Activated CD4-positive, alpha-beta memory T cell treated with anti-CD3 and anti-CD28 coated beads for 36 hours (primary cell): ENCODE measurements at regions of chr10 and their contacts with region 1.

Region 1: DNA sequence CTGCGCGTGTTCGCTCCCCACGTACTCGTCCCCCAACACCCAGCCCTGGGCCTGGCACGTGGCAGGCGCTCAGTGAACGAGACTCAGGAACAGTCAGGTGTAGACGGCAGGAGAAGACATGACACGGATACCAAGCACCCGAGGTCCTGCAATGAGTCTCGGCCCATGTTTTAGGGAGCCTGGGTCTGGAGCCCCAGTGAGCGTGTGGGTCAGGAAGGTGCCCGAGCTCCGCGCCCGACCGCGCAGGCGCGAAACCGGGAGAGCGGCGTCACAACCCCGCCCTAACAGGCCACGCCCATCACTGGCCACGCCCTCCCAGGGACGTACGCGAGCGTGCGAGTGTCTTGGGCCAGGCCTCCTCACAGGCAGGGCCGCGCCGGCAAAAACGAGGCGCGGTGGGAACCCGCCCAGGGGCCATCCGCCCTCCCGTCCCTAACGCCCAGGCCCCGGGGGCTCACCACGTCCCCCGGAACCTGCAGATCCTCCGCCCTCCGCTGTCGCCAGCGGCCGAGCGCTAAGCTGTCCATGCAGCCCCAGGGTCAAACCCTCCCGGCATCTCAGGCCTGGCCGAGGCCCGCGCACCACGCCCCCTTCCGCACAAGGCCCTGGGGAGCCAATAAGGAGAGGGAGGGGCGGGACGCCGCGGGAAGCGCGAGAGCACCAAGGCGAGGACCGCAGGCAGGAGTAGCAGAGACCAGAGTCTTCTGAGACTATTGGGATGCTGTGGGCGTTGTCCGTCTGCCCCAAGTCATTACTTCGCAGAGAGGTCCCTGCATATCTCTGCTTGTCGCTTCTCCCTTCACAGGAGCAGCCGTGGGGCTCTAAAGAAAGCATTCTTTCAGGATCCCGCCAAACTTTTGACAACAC is at the start of gene C10orf143:
- DNase-seq: peak; percentile 98
- H3K4me3 Mint-ChIP-seq: peak within 1 kb of the TSS; percentile 88
- H3K27ac Mint-ChIP-seq: peak within 1 kb of the TSS; percentile 99
- H3K4me1 Mint-ChIP-seq: peaks cover 46% of the 10 kb centered on the region
- H3K27me3 Mint-ChIP-seq: no peaks in the 10 kb centered on the region
- total RNA-seq, gene C10orf143: 2.5 to 3.0 TPM

Region 2: GRCh38 chr10:129466703-129467358 is 643.6 kb before region 1 on chr10 and contains the start of gene MGMT:
- CTCF ChIA-PET with region 1: interaction called, 7 read pairs
- POLR2A ChIA-PET with region 1: interaction called, 13 read pairs
- intact Hi-C with region 1: loop called (anchors 1 kb)
- DNase-seq: peak; percentile 99
- H3K4me3 Mint-ChIP-seq: peak within 1 kb of the TSS; percentile 75
- H3K27ac Mint-ChIP-seq: peak within 1 kb of the TSS; percentile 56
- H3K4me1 Mint-ChIP-seq: peaks cover 11% of the 10 kb centered on the region
- H3K27me3 Mint-ChIP-seq: peaks cover 3% of the 10 kb centered on the region
- total RNA-seq, gene MGMT: 22.9 to 23.8 TPM

Region 3: GRCh38 chr10:129963641-129964501 is 146.6 kb before region 1 on chr10 and contains the start of gene EBF3:
- CTCF ChIA-PET with region 1: no interaction called
- POLR2A ChIA-PET with region 1: no interaction called
- intact Hi-C with region 1: loop called (anchors 5 kb)
- DNase-seq: peak; percentile 47
- H3K4me3 Mint-ChIP-seq: peak within 1 kb of the TSS; percentile 63
- H3K27ac Mint-ChIP-seq: no peak within 1 kb of the TSS
- H3K4me1 Mint-ChIP-seq: peaks cover 15% of the 10 kb centered on the region
- H3K27me3 Mint-ChIP-seq: peaks cover 62% of the 10 kb centered on the region
- total RNA-seq, gene EBF3: not detected

Region 4: GRCh38 chr10:130127364-130128061 is 17.0 kb after region 1 on chr10:
- CTCF ChIA-PET with region 1: interaction called, 50 read pairs
- POLR2A ChIA-PET with region 1: interaction called, 16 read pairs
- intact Hi-C with region 1: loop called (anchors 1 kb)
- DNase-seq: peak; percentile 73
- H3K4me3 Mint-ChIP-seq: no peak overlapping the region
- H3K27ac Mint-ChIP-seq: no peak overlapping the region
- H3K4me1 Mint-ChIP-seq: peaks cover 5% of the 10 kb centered on the region
- H3K27me3 Mint-ChIP-seq: peaks cover 19% of the 10 kb centered on the region

Region 5: GRCh38 chr10:130136226-130137089 is 26.0 kb after region 1 on chr10 and contains the start of gene GLRX3:
- CTCF ChIA-PET with region 1: interaction called, 59 read pairs
- POLR2A ChIA-PET with region 1: interaction called, 70 read pairs
- intact Hi-C with region 1: loop called (anchors 1 kb)
- DNase-seq: peak; percentile 90
- H3K4me3 Mint-ChIP-seq: peak within 1 kb of the TSS; percentile 88
- H3K27ac Mint-ChIP-seq: peak within 1 kb of the TSS; percentile 83
- H3K4me1 Mint-ChIP-seq: peaks cover 42% of the 10 kb centered on the region
- H3K27me3 Mint-ChIP-seq: peaks cover 2% of the 10 kb centered on the region
- total RNA-seq, gene GLRX3: 112 to 113 TPM

Region 6: GRCh38 chr10:130141878-130142277 is 31.4 kb after region 1 on chr10:
- CTCF ChIA-PET with region 1: interaction called, 59 read pairs
- POLR2A ChIA-PET with region 1: interaction called, 70 read pairs
- intact Hi-C with region 1: no loop called
- DNase-seq: peak; percentile 47
- H3K4me3 Mint-ChIP-seq: no peak overlapping the region
- H3K27ac Mint-ChIP-seq: peak overlapping the region; percentile 77
- H3K4me1 Mint-ChIP-seq: peaks cover 61% of the 10 kb centered on the region
- H3K27me3 Mint-ChIP-seq: no peaks in the 10 kb centered on the region

Region 7: DNA sequence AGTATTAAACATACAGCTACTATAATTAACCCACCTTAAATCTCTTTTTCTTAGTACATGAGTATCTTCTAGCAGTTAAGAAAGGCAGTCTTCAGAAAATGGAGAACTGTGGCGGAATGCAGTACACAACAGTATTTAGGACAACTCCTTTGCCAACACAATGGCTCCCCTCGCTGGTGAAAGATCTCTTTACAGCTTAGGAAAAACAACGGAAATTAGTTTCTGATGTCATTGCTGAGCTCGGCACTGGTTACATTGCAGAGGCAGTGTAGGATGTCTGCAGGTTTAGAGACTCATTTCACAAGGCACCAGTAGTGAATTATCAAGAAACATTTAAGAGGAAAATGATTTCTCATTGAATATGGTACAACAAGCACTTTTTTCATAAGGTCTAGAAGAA is 69.2 kb after region 1 on chr10:
- CTCF ChIA-PET with region 1: interaction called, 11 read pairs
- POLR2A ChIA-PET with region 1: interaction called, 3 read pairs
- intact Hi-C with region 1: loop called (anchors 1 kb)
- DNase-seq: peak; percentile 53
- H3K4me3 Mint-ChIP-seq: no peak overlapping the region
- H3K27ac Mint-ChIP-seq: peak overlapping the region; percentile 42
- H3K4me1 Mint-ChIP-seq: peaks cover 20% of the 10 kb centered on the region
- H3K27me3 Mint-ChIP-seq: no peaks in the 10 kb centered on the region